ENCODE measurements at regions of chr3 and their contacts with region 1.

Region 1: GRCh38 chr3:37054370-37054769 is 61.1 kb downstream of the MLH1 start:
- DNase-seq: peak in 1 of 2 donors; percentile 42
- ATAC-seq: peak; percentile 86 to 94 (median 92)
- H3K4me3 ChIP-seq: peak overlapping the region in 3 of 10 donors; percentile 4 to 16 (median 11)
- H3K27ac ChIP-seq: peak overlapping the region; percentile 66 to 92 (median 84)
- H3K4me1 ChIP-seq: peaks cover 21 to 70% (median 50%) of the 10 kb centered on the region in 9 donors
- H3K27me3 ChIP-seq: no peaks in the 10 kb centered on the region
- CTCF ChIP-seq: no peak

Region 2: DNA sequence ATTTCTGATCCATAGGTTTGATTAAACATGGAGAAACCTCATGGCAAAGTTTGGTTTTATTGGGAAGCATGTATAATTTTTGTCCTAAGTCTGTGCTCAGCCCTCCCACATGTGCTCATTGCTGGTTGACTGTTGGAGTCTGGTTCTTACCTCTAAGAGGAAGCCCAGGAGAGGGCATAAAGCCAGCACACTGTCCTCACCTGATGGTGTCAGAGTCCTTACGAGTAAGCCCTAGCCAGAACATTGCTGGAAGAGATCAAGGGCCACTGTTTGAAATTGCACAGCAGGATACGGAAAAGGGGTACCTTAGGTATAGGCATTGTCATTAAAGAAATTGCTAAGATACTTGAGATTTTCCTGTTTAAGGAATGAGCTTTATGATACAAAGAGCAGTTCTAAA is 39.8 kb before region 1 on chr3:
- intact Hi-C with region 1: loop called in 3 of 10 experiments (anchors 5 kb)
- DNase-seq: peak; percentile 71 to 81
- ATAC-seq: peak; percentile 62 to 84 (median 80)
- H3K4me3 ChIP-seq: no peak overlapping the region
- H3K27ac ChIP-seq: peak overlapping the region; percentile 42 to 95 (median 80)
- H3K4me1 ChIP-seq: peaks cover 0 to 44% (median 5%) of the 10 kb centered on the region in 9 donors
- H3K27me3 ChIP-seq: no peaks in the 10 kb centered on the region
- CTCF ChIP-seq: no peak